ENCODE measurements at regions of chr2 and their contacts with region 1.

Region 1: GRCh38 chr2:99337113-99338028 is at the start of gene EIF5B:
- DNase-seq: peak; percentile 89

Region 2: GRCh38 chr2:99035920-99036319 is 301.5 kb before region 1 on chr2:
- CTCF ChIA-PET with region 1: no interaction called
- POLR2A ChIA-PET with region 1: no interaction called
- DNase-seq: no peak

Region 3: GRCh38 chr2:99180755-99181623 is 156.4 kb before region 1 on chr2 and contains the starts of genes MITD1 and MRPL30:
- CTCF ChIA-PET with region 1: interaction called, 3 read pairs
- POLR2A ChIA-PET with region 1: interaction called, 17 read pairs
- DNase-seq: peak; percentile 84

Region 4: DNA sequence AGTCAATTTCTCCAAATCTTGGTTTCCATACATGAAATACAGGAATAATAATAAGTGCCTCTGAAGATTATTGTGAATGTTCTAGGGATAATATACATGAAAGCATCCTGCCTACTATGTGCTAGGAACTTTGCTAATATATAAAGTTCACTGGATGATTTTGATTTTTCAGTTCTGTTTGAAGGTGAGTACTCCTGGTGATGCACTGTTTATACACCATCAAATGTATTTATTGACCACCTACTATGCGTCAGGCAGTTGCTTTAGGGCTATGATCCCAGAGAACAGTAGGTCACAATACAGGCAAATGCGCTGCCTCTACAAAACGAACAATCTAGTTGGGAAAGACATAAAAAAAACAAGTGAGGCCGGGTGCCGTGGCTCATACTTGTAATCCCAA is 12.0 kb before region 1 on chr2:
- CTCF ChIA-PET with region 1: interaction called, 3 read pairs
- POLR2A ChIA-PET with region 1: interaction called, 22 read pairs
- DNase-seq: no peak

Region 5: GRCh38 chr2:99348173-99348572 is 10.8 kb after region 1 on chr2:
- CTCF ChIA-PET with region 1: interaction called, 5 read pairs
- POLR2A ChIA-PET with region 1: interaction called, 10 read pairs
- DNase-seq: no peak

Region 6: GRCh38 chr2:99356853-99357252 is 19.5 kb after region 1 on chr2:
- CTCF ChIA-PET with region 1: interaction called, 4 read pairs
- POLR2A ChIA-PET with region 1: interaction called, 14 read pairs
- DNase-seq: no peak

Measured in HEK293T (cell line).